MCF 10A (cell line): ENCODE measurements at regions of chr2 and their contacts with region 1.

Region 1: DNA sequence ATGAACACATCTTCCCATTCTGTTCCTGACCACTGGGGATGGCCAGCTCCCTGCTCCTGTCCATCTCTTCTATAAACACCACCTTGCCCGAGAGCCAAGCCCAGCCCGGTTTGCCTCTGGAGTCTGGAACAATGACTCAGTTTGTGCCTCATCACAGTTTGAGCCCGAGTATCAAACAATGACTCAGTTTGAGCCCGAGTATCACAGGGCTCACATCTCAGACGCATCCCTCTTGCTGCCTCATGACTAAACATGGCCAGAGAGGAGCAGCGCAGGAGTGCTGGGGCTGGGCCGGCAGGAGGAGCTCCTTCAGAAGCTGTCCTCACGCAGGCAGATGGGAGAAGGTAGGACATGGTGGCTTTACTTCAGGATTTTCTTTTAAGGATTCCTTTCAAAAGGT is 68.7 kb downstream of the PXDN start:
- DNase-seq: peak; percentile 97
- H3K4me3 Mint-ChIP-seq: peak overlapping the region; percentile 6
- H3K27ac Mint-ChIP-seq: peak overlapping the region; percentile 77
- H3K4me1 Mint-ChIP-seq: peaks cover 12% of the 10 kb centered on the region
- H3K27me3 Mint-ChIP-seq: no peaks in the 10 kb centered on the region
- CTCF ChIP-seq: peak; percentile 62

Region 2: DNA sequence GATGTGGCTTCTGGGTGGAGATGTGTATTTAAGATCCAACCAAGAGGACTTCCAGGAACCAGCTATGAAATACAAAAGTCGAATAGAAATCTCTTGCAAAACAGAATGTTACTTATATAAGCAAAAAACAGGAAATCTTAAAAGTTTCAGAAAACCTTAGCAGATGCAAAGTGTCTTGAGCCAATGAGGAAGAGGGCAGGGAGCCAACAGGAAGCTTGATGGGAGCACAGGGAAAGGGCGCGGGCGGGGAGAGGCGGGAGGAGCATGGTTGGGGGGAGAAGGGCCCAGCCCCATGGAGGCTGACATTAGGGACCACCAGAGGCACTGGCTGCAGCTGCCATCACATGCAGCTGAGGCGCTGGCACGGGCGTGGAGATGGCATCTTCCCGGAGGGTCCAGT is 521.7 kb before region 1 on chr2:
- CTCF ChIA-PET with region 1: no interaction called
- POLR2A ChIA-PET with region 1: no interaction called
- intact Hi-C with region 1: no loop called
- DNase-seq: no peak
- H3K4me3 Mint-ChIP-seq: no peak overlapping the region
- H3K27ac Mint-ChIP-seq: no peak overlapping the region
- H3K4me1 Mint-ChIP-seq: peaks cover 4% of the 10 kb centered on the region
- H3K27me3 Mint-ChIP-seq: no peaks in the 10 kb centered on the region
- CTCF ChIP-seq: no peak

Region 3: DNA sequence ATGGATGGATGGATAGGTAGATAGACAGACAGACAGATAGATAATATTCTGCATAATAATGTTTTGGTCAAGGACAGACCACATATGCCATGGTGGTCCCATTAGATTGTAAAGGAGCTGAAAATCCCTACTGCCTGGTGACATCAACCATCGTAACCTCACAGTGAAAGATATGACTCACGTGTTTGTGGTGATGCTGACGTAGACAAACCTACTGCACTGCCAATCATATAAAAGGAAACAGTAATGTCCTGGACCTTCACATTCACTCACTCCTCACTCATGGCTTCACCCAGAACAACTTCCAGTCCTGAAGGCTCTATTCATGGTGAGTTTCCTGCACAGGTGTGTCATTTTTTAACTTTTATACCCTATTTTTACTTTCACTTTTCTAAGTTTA is 465.3 kb before region 1 on chr2:
- CTCF ChIA-PET with region 1: no interaction called
- POLR2A ChIA-PET with region 1: no interaction called
- intact Hi-C with region 1: no loop called
- DNase-seq: no peak
- H3K4me3 Mint-ChIP-seq: no peak overlapping the region
- H3K27ac Mint-ChIP-seq: no peak overlapping the region
- H3K4me1 Mint-ChIP-seq: peaks cover 3% of the 10 kb centered on the region
- H3K27me3 Mint-ChIP-seq: no peaks in the 10 kb centered on the region
- CTCF ChIP-seq: no peak

Region 4: GRCh38 chr2:1591978-1592907 is 83.4 kb before region 1 on chr2:
- CTCF ChIA-PET with region 1: no interaction called
- POLR2A ChIA-PET with region 1: interaction called, 8 read pairs
- intact Hi-C with region 1: loop called (anchors 5 kb)
- DNase-seq: peak; percentile 45
- H3K4me3 Mint-ChIP-seq: no peak overlapping the region
- H3K27ac Mint-ChIP-seq: no peak overlapping the region
- H3K4me1 Mint-ChIP-seq: peaks cover 15% of the 10 kb centered on the region
- H3K27me3 Mint-ChIP-seq: no peaks in the 10 kb centered on the region
- CTCF ChIP-seq: no peak

Region 5: GRCh38 chr2:1707771-1708418 is 32.3 kb after region 1 on chr2:
- CTCF ChIA-PET with region 1: interaction called, 10 read pairs
- POLR2A ChIA-PET with region 1: interaction called, 13 read pairs
- intact Hi-C with region 1: no loop called
- DNase-seq: peak; percentile 98
- H3K4me3 Mint-ChIP-seq: peak overlapping the region; percentile 73
- H3K27ac Mint-ChIP-seq: peak overlapping the region; percentile 96
- H3K4me1 Mint-ChIP-seq: peaks cover 18% of the 10 kb centered on the region
- H3K27me3 Mint-ChIP-seq: no peaks in the 10 kb centered on the region
- CTCF ChIP-seq: no peak

Region 6: GRCh38 chr2:1730015-1730927 is 54.6 kb after region 1 on chr2:
- CTCF ChIA-PET with region 1: interaction called, 11 read pairs
- POLR2A ChIA-PET with region 1: interaction called, 9 read pairs
- intact Hi-C with region 1: no loop called
- DNase-seq: peak; percentile 70
- H3K4me3 Mint-ChIP-seq: peak overlapping the region; percentile 53
- H3K27ac Mint-ChIP-seq: peak overlapping the region; percentile 99
- H3K4me1 Mint-ChIP-seq: peaks cover 32% of the 10 kb centered on the region
- H3K27me3 Mint-ChIP-seq: no peaks in the 10 kb centered on the region
- CTCF ChIP-seq: no peak

Region 7: DNA sequence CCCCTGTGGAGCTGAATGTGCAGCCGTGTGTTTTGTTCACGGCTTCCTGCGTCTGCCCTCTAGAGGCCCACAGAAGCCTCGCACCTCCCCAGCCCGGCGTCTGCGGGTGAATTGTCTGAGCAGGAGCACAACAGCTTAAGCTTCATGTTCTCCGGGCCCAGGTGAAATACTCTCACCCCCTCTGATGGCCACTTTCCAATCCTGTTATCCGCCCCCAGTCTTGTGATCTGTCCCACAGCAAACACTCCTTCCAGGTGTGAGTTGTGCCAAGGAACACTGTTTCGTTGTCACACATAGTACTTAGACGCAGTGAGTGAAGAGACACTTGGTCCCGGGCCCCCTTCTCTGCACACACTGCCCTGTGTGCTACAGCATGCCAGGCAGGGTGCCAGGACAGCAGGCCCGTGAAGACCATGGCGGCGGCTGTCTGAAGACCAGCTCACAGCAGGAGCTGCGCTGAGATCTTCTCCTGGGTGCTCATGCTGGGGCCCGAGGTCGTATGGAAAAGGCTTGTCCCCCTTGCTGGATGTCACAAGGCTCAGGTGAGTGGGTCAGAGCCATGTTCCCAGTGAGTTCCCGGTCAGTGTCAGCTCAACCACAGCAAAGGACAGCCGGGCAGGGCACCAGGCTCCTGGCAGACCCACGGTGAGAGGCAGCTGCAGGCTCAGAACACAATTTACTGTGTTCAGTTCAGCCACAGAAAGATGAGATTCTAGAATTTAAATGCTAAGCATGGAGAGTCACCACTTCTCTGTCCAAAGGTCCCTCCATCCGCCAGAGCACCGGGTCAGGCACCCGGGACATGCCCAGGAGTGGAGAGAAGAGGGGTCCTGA is 75.5 kb after region 1 on chr2:
- CTCF ChIA-PET with region 1: interaction called, 30 read pairs
- POLR2A ChIA-PET with region 1: interaction called, 4 read pairs
- intact Hi-C with region 1: loop called (anchors 2 kb)
- DNase-seq: peak; percentile 74
- H3K4me3 Mint-ChIP-seq: no peak overlapping the region
- H3K27ac Mint-ChIP-seq: no peak overlapping the region
- H3K4me1 Mint-ChIP-seq: peaks cover 13% of the 10 kb centered on the region
- H3K27me3 Mint-ChIP-seq: no peaks in the 10 kb centered on the region
- CTCF ChIP-seq: peak; percentile 88

Region 8: GRCh38 chr2:1817256-1818051 is 141.8 kb after region 1 on chr2:
- CTCF ChIA-PET with region 1: interaction called, 4 read pairs
- POLR2A ChIA-PET with region 1: no interaction called
- intact Hi-C with region 1: loop called (anchors 2 kb)
- DNase-seq: peak; percentile 75
- H3K4me3 Mint-ChIP-seq: peak overlapping the region; percentile 8
- H3K27ac Mint-ChIP-seq: peak overlapping the region; percentile 73
- H3K4me1 Mint-ChIP-seq: peaks cover 6% of the 10 kb centered on the region
- H3K27me3 Mint-ChIP-seq: no peaks in the 10 kb centered on the region
- CTCF ChIP-seq: peak; percentile 97

Region 9: DNA sequence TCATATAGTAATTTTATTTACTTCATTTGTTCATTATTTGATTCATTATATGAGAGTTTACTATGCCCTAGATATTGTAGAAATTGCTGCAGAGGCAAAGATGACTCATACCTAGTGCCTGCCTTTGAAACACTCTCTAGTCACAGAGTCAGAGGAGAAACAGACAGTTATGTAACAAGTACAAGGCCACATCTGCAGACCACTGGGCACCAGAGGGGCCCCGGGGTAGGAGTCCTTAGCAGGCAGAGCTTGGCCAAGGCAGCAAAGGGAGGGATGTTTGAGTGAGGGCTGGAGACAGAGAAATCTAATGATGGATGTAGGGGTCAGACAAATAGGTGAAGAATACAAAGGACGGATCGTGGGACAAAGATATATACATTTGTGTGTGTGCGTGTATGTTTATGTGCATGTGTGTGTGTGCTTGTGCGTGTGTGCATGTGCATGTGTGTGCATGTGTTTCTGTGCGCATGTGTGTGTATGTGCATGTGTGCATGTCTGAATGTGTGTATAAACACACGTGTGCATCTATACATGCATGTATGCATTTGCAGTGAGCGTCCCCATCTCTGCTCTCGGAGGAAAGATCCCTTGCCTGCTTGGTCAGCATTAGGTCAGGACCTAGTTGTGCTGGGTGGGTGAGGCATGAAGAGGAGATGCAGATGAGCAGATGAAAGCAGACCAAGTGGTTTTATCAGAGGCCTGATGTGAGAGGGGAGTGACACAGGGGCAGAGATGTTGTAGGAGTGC is 826.0 kb after region 1 on chr2:
- CTCF ChIA-PET with region 1: no interaction called
- POLR2A ChIA-PET with region 1: no interaction called
- intact Hi-C with region 1: no loop called
- DNase-seq: no peak
- H3K4me3 Mint-ChIP-seq: no peak overlapping the region
- H3K27ac Mint-ChIP-seq: no peak overlapping the region
- H3K4me1 Mint-ChIP-seq: no peaks in the 10 kb centered on the region
- H3K27me3 Mint-ChIP-seq: peaks cover 11% of the 10 kb centered on the region
- CTCF ChIP-seq: no peak